ENCODE measurements at regions of chrX and their contacts with region 1.

Region 1: GRCh38 chrX:2500267-2501075 is at the starts of genes DHRSX and ZBED1:
- DNase-seq: peak; percentile 63
- ATAC-seq: peak; percentile 77
- H3K4me3 Mint-ChIP-seq: peak within 1 kb of the TSS; percentile 82
- H3K27ac Mint-ChIP-seq: peak within 1 kb of the TSS; percentile 74
- H3K4me1 Mint-ChIP-seq: peaks cover 33% of the 10 kb centered on the region
- H3K27me3 Mint-ChIP-seq: no peaks in the 10 kb centered on the region
- CTCF ChIP-seq: no peak
- total RNA-seq, gene DHRSX: 23.2 and 28.3 TPM in 2 replicates
- total RNA-seq, gene ZBED1: 49.5 and 50.1 TPM in 2 replicates

Region 2: DNA sequence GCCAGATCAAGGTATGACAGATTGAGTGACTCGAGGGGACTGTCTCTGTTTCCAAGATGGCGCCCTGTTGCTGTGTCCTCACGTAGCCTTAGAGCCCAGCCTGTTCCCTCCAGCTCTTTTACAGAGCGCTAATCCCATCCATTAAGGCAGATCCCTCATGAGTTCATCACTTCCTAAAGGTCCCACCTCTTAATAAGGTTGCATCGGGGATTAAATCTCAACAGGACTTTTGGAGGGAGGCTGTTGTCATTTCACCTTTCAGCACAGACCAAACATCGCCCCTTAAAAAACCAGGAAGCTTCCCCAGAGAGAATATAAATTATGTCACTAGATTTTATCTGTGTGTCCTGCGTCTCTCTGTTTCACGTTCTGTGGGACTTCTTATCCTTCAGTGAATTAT is 33.0 kb after region 1 on chrX:
- CTCF ChIA-PET with region 1: no interaction called
- POLR2A ChIA-PET with region 1: no interaction called
- intact Hi-C with region 1: loop called (anchors 5 kb)
- DNase-seq: no peak
- ATAC-seq: no peak
- H3K4me3 Mint-ChIP-seq: no peak overlapping the region
- H3K27ac Mint-ChIP-seq: no peak overlapping the region
- H3K4me1 Mint-ChIP-seq: peaks cover 2% of the 10 kb centered on the region
- H3K27me3 Mint-ChIP-seq: peaks cover 3% of the 10 kb centered on the region
- CTCF ChIP-seq: no peak

Region 3: GRCh38 chrX:2608638-2609430 is 108.4 kb after region 1 on chrX:
- CTCF ChIA-PET with region 1: no interaction called
- POLR2A ChIA-PET with region 1: no interaction called
- intact Hi-C with region 1: loop called (anchors 1 kb)
- DNase-seq: peak; percentile 84
- ATAC-seq: peak; percentile 97
- H3K4me3 Mint-ChIP-seq: peak overlapping the region; percentile 93
- H3K27ac Mint-ChIP-seq: peak overlapping the region; percentile 81
- H3K4me1 Mint-ChIP-seq: peaks cover 36% of the 10 kb centered on the region
- H3K27me3 Mint-ChIP-seq: no peaks in the 10 kb centered on the region
- CTCF ChIP-seq: no peak

Region 4: GRCh38 chrX:2793752-2794151 is 293.3 kb after region 1 on chrX:
- CTCF ChIA-PET with region 1: no interaction called
- POLR2A ChIA-PET with region 1: no interaction called
- intact Hi-C with region 1: no loop called
- DNase-seq: no peak
- ATAC-seq: no peak
- H3K4me3 Mint-ChIP-seq: no peak overlapping the region
- H3K27ac Mint-ChIP-seq: no peak overlapping the region
- H3K4me1 Mint-ChIP-seq: no peaks in the 10 kb centered on the region
- H3K27me3 Mint-ChIP-seq: no peaks in the 10 kb centered on the region
- CTCF ChIP-seq: no peak

Measured in activated B cell treated with CpG ODN at 0.5 μM for 24 hours (primary cell).